Cardiac septum (tissue), 1 donor: ENCODE measurements at regions of chr11 and their contacts with region 1.

Region 1: DNA sequence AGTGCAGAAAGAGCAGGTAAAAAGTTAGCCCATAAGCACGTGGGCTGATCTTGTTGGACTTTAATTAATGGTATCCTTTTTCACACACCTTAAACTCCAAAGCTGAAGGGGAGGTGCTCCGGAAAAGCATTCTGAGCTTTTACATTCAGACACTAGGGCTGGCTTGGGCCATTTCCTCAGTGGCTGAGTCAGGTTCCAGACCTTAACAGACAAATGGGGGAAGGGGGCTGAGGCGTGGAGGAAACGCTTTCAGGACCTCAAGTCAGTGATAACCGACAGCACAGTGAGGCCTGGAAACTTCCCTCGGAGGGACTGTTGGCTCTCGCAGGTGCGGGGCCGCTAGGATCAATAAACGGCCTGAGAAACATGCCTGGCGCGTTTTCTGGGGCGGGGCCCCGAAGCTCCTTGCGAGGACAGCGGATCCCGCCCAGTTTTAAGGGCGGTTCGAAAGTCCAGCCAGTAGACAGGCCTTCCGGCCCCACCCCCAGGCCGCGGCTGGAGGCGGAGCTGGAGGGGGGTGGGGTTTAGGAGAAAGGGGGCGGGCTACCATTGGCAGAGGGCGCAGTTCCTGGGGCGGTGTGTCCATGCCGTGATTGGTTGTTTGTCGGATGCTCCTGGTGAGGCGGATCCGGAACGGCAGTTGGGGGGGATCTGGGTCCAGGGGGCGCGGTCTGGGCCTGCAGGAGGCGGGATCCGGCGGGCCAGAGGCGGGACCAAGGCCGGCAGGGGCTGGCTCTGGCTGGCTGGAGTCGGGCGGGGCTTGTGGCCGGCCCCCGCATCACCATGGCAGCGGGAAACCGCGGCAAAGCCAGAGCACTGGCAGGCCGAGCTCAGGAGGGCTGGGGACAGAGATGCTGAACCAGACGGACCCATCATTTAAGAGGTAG is 8.0 kb downstream of the C11orf52 start:
- DNase-seq: peak; percentile 98

Region 2: DNA sequence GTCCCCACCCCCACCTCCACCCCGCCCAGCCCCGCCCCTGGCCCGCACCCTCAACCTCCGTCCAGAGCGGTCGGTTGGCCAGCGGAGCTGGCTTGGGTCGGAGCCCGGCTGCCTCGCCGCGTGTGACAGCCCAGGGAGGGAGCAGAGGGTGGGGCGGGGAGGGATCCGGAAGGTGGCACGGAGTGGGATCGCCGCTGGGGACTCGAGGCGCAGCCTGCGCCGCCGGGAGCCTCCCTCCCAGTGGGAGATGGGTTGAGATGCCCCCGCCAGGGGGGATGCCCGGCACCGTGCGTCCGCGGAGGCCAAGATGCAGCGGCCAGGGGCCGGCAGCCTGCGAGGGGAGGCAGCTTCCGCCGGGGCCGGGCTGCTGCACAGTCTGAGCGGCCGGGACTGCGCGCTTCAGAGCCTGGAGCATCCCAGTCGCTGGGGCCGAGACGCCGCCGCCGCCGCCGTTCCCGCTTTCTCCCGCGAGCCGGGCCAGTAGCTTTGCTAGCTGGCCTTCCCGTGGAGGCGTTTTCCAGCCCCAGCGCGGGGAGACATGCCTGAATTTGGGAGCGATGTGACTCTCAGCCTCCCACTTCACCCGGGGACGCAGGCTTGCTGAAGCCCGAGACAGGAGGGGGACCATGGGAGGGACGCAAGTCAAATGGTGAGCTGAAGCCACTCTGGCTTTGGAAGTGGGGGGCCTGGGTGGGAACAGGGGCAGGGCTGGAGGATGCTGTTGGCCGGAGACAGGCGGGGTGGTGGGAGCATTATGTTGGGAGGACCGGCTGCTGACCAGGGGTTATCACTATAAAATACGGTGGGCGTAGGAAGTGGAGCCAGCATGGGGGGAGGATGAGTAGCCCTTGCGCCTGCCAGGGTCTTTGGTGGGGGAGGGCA is 50.6 kb after region 1 on chr11:
- intact Hi-C with region 1: no loop called
- DNase-seq: peak; percentile 89

Region 3: GRCh38 chr11:112086422-112087191 is 159.9 kb after region 1 on chr11 and contains the starts of genes SDHD and TIMM8B:
- intact Hi-C with region 1: loop called (anchors 5 kb)
- DNase-seq: peak; percentile 98
- total RNA-seq, gene SDHD: 209 TPM
- total RNA-seq, gene TIMM8B: 100 TPM